ENCODE measurements at regions of chr14 and their contacts with region 1.

Region 1: DNA sequence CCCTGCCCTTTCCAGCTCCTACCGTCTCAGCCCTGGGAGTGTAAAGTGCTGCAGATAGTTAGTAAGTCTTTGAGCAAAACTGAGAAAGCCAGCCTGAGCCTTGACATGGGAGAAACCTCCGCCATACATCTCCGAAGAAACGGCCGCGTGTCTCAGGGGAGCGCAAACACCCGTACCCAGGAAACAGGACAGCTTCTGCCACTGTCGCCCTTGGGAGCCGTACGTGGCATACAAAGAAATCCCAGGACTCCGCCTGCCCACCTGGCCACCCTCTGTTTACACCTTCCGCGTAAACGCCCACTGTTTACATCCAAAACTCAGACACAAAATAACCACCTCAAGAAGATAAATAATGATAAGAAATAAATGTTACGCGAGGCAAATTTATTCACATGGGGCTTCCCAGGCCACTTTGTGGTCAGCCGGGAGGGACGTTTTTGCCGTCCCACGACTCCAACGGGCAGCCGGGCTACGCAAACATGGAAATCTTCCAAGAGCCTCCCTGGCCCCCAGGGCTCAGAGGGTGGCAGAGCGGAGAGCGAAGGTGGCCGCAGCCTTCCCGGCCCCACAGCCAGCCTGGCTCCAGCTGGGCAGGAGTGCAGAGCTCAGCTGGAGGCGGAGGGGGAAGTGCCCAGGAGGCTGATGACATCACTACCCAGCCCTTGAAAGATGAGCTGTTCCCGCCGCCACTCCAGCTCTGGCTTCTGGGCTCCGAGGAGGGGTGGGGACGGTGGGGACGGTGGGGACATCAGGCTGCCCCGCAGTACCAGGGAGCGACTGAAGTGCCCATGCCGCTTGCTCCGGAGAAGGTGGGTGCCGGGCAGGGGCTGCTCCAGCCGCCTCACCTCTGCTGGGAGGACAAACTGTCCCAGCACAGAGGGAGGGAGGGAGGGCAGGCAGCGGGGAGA is at the start of gene BDKRB2:
- DNase-seq: peak; percentile 91
- H3K4me3 ChIP-seq: peak within 1 kb of the TSS; percentile 36 to 59 (median 50)
- H3K27ac ChIP-seq: peak within 1 kb of the TSS; percentile 77 to 84 (median 83)
- H3K4me1 ChIP-seq: peaks cover 0 to 34% (median 30%) of the 10 kb centered on the region in 4 donors
- H3K27me3 ChIP-seq: no peaks in the 10 kb centered on the region
- CTCF ChIP-seq: no peak
- EP300 ChIP-seq: peak in 1 of 4 donors; percentile 43
- POLR2A ChIP-seq: peak; percentile 87 to 90
- total RNA-seq, gene BDKRB2: 1.8 to 4.5 (median 3.9) TPM

Region 2: GRCh38 chr14:95545179-95546168 is 658.9 kb before region 1 on chr14:
- intact Hi-C with region 1: no loop called
- DNase-seq: no peak
- H3K4me3 ChIP-seq: no peak overlapping the region
- H3K27ac ChIP-seq: no peak overlapping the region
- H3K4me1 ChIP-seq: no peaks in the 10 kb centered on the region
- H3K27me3 ChIP-seq: no peaks in the 10 kb centered on the region
- CTCF ChIP-seq: no peak
- EP300 ChIP-seq: no peak
- POLR2A ChIP-seq: no peak

Region 3: GRCh38 chr14:96255501-96256366 is 51.3 kb after region 1 on chr14 and contains the start of gene BDKRB1:
- intact Hi-C with region 1: loop called (anchors 2 kb)
- DNase-seq: no peak
- H3K4me3 ChIP-seq: no peak within 1 kb of the TSS
- H3K27ac ChIP-seq: peak within 1 kb of the TSS; percentile 79 to 90 (median 84)
- H3K4me1 ChIP-seq: peaks cover 0 to 49% (median 43%) of the 10 kb centered on the region in 4 donors
- H3K27me3 ChIP-seq: no peaks in the 10 kb centered on the region
- CTCF ChIP-seq: no peak
- EP300 ChIP-seq: peak in 3 of 4 donors; percentile 69 to 91 (median 88)
- POLR2A ChIP-seq: no peak
- total RNA-seq, gene BDKRB1: 0.33 to 2.9 (median 0.73) TPM

Measured in sigmoid colon (tissue), 7 donors.